ENCODE measurements at regions of chrX and their contacts with region 1.

Region 1: DNA sequence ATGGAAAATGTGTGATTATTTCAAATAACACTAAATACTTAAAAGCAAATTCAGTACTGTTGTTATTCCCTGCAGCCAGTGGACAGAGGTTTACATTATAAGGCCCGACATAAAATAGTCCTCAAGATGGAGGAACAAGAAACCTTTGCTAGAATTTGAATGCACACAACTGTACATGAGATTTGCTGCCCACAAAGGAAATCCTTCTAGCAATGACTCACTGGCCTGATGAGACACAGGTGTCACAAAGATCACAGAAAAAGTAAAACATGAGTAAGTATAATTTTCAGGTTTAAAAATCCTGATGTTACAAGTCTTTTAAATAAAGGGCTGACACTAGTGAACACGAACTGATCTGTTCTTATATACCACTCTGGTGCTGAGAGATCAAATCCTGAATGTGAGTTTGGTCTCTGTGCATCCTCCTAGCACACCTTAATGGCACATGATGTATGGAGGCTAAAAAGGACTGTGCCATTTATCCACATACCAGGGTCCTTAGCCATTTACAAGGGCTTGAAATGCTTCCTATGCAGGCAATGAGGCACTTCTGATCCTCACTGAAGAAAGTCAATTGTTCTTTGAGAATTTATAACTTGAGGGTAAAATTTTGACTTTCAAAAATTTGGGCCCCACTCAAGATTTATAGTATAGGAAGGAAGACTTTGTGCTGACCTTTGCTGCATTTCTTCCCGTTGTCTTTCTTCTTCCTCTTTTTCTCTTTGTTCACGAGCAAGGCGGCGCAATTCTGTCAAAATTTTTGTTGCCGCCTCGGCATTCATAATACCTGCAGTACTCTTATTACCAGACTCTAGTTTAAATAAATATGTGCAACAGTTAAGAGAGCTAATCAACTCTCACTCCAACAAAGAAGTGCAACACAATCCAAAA is 23.0 kb downstream of the MAP7D3 start:
- DNase-seq: no peak
- H3K4me3 ChIP-seq: no peak overlapping the region
- H3K27ac ChIP-seq: no peak overlapping the region
- H3K4me1 ChIP-seq: no peaks in the 10 kb centered on the region; a peak in 1 of 4 replicates
- H3K27me3 ChIP-seq: no peaks in the 10 kb centered on the region
- CTCF ChIP-seq: no peak
- EP300 ChIP-seq: no peak
- RAD21 ChIP-seq: no peak

Region 2: DNA sequence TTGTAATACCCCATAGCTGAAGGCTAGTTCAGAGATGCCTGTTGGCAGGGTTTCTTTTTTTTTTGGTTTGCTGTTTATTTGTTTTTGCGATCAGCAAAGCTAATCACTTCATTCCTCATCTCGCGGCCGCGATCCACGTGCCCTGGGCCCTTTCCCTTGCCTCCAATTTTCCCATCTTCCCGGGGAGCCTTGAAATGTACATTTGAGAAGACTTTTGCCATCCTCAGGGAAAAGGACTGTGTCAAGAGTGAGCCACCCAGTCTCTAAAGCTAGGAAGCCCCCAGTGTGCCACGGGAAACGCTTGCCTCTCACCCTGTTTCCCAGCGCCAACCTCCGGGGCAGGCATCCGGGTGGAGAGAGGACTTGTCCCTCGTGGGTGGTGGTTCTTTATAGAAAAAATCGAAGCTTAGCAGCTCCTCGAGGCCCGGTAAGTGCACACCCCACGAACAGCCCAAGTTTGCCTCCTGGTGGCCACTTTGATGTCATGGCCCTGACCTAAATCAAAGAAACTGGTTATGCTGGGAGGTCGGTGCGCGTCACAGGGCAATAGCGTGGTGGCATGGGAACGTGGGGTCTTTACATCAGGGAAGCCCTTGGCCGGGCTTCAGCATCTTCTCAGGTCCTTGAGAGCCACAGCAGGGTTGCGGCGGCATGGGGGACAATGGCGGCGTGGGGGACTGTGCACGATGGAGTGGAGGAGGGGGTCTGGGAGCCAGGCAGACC is 19.0 kb before region 1 on chrX:
- CTCF ChIA-PET with region 1: interaction called, 15 read pairs
- POLR2A ChIA-PET with region 1: no interaction called
- DNase-seq: peak; percentile 62
- H3K4me3 ChIP-seq: no peak overlapping the region
- H3K27ac ChIP-seq: no peak overlapping the region
- H3K4me1 ChIP-seq: no peaks in the 10 kb centered on the region
- H3K27me3 ChIP-seq: peaks cover 6% of the 10 kb centered on the region; the same call in 1 of the 2 replicates
- CTCF ChIP-seq: peak; percentile 67
- EP300 ChIP-seq: no peak
- RAD21 ChIP-seq: peak; percentile 68

Measured in SK-N-SH (cell line).